ENCODE measurements at regions of chr1 and their contacts with region 1.

Region 1: DNA sequence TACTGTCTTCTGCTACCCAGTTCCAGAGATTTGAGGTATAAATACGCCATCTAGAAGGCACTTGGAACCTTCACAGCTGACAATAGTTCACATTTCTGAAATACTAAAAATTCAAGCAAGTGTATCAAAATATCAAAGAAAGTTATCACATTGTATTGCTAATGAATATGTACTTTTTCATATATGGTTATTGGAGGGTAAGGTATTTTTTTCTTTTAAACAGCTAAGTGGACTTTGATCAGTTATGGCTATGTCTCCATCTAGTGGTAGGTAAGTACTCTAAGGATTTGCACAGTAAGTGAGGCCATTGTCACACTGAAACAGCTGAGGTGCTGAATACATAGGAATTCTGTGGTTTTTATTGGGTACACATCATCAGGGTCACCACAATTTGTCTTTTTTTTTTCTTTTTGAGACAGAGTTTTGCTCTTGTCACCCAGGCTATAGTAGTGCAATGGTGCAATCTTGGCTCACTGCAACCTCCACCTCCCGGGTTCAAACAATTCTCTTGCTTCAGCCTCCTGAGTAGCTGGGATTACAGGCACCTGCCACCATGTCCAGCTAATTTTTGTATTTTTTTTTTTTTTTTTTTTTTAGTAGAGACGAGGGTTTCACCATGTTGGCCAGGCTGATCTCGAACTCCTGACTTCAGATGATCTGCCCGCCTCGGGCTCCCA is 49.1 kb upstream of the CR2 start:
- DNase-seq: peak; percentile 70
- H3K4me3 ChIP-seq: no peak overlapping the region
- H3K27ac ChIP-seq: no peak overlapping the region
- H3K4me1 ChIP-seq: peaks cover 5% of the 10 kb centered on the region
- H3K27me3 ChIP-seq: peaks cover 6 to 9% of the 10 kb centered on the region in 2 experiments
- CTCF ChIP-seq: peak; percentile 49 to 55
- POLR2A ChIP-seq: no peak

Region 2: GRCh38 chr1:206935491-206936067 is 469.4 kb before region 1 on chr1:
- CTCF ChIA-PET with region 1: interaction called, 6 read pairs
- POLR2A ChIA-PET with region 1: no interaction called
- dilution Hi-C with region 1: no loop called
- intact Hi-C with region 1: loop called (anchors 2 kb)
- DNase-seq: peak; percentile 25
- H3K4me3 ChIP-seq: no peak overlapping the region
- H3K27ac ChIP-seq: no peak overlapping the region
- H3K4me1 ChIP-seq: no peaks in the 10 kb centered on the region
- H3K27me3 ChIP-seq: no peaks in the 10 kb centered on the region
- CTCF ChIP-seq: peak; percentile 68 to 89
- POLR2A ChIP-seq: no peak

Region 3: DNA sequence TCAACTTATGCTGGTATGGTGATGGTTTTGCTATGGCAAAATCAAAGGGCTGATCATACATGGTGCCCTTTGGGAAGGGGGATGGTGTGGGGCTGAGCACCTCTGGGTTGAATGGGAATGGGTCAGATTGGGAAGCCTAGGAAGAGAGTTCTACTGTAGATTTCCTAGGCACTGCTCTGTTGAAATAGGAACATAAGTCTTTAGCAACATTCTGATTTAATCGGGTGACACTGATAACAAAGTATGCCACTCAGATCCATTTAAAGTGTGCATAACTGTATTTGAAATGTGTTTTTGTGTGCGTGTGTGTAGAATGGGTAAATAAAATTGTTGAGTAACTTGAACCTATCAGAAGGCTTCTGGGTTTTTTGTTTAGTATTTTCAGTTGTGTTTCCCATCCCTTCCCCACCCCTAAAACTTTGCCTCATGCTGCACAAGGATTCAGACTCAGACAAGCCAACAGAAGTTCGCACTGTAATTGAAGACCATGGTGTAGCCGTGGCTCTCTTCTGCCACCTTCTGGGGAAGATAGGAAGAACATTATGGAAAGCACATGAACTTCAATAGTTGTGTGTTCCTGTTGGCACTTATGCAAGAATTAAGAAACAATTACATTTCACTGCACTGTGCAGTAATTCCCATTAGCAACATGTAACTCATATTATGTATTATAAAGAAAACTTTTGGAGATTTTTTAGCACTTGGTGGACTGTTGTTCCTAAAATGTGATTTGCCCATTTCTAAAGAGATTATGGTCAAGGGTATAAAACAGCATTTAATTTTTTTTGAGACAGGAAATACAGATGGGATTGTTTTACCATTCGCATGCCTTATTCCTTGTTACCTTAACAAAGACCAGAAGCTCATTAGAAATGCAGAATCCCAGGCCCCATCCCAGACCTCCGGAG is 327.3 kb before region 1 on chr1:
- CTCF ChIA-PET with region 1: interaction called, 181 read pairs
- POLR2A ChIA-PET with region 1: no interaction called
- dilution Hi-C with region 1: no loop called
- intact Hi-C with region 1: no loop called
- DNase-seq: peak; percentile 85
- H3K4me3 ChIP-seq: no peak overlapping the region
- H3K27ac ChIP-seq: no peak overlapping the region
- H3K4me1 ChIP-seq: no peaks in the 10 kb centered on the region
- H3K27me3 ChIP-seq: peaks cover 2 to 5% of the 10 kb centered on the region in 2 experiments
- CTCF ChIP-seq: peak; percentile 69 to 75
- POLR2A ChIP-seq: no peak

Region 4: GRCh38 chr1:207181838-207182237 is 223.1 kb before region 1 on chr1:
- CTCF ChIA-PET with region 1: interaction called, 20 read pairs
- POLR2A ChIA-PET with region 1: no interaction called
- dilution Hi-C with region 1: no loop called
- intact Hi-C with region 1: loop called (anchors 1 kb)
- DNase-seq: peak; percentile 23
- H3K4me3 ChIP-seq: no peak overlapping the region
- H3K27ac ChIP-seq: no peak overlapping the region
- H3K4me1 ChIP-seq: no peaks in the 10 kb centered on the region
- H3K27me3 ChIP-seq: peaks cover 0 to 4% of the 10 kb centered on the region in 2 experiments
- CTCF ChIP-seq: peak in 1 of 2 donors; percentile 1
- POLR2A ChIP-seq: no peak

Region 5: DNA sequence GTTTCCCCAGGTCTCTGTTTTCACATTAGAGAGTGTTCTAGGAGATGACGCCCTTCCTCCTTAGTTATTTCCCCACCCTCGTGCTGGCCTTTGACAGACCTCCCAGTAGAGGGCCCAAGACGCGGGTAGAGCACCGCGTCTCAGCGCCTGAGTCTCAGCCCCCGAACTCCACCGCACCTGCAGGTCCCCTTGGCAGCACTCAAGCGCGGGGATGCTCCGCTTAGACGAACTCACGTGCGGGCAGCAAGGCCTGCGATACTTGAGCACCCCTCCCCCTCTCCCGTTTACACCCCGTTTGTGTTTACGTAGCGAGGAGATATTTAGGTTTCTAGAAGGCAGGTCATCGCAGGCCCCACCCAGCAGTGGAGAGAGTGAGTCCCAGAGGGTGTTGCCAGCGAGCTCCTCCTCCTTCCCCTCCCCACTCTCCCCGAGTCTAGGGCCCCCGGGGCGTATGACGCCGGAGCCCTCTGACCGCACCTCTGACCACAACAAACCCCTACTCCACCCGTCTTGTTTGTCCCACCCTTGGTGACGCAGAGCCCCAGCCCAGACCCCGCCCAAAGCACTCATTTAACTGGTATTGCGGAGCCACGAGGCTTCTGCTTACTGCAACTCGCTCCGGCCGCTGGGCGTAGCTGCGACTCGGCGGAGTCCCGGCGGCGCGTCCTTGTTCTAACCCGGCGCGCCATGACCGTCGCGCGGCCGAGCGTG is 83.8 kb before region 1 on chr1 and contains the start of gene CD55:
- CTCF ChIA-PET with region 1: interaction called, 30 read pairs
- POLR2A ChIA-PET with region 1: no interaction called
- dilution Hi-C with region 1: no loop called
- intact Hi-C with region 1: loop called (anchors 1 kb)
- DNase-seq: peak; percentile 98
- H3K4me3 ChIP-seq: peak within 1 kb of the TSS; percentile 74 to 94 (median 87)
- H3K27ac ChIP-seq: peak within 1 kb of the TSS; percentile 92
- H3K4me1 ChIP-seq: peaks cover 17% of the 10 kb centered on the region
- H3K27me3 ChIP-seq: no peaks in the 10 kb centered on the region
- CTCF ChIP-seq: peak; percentile 35 to 43
- POLR2A ChIP-seq: peak; percentile 77
- total RNA-seq, gene CD55: 179 and 223 TPM in 2 replicates

Measured in endothelial cell of umbilical vein (primary cell).